ENCODE measurements at regions of chr1 and their contacts with region 1.

Region 1: GRCh38 chr1:9500756-9501754 is 38.2 kb upstream of the SLC25A33 start:
- DNase-seq: no peak
- ATAC-seq: no peak

Region 2: GRCh38 chr1:9573723-9574122 is 72.7 kb after region 1 on chr1:
- intact Hi-C with region 1: loop called (anchors 2 kb)
- DNase-seq: no peak
- ATAC-seq: peak; percentile 51

Measured in Right ventricle myocardium superior (tissue), 1 donor.